ENCODE measurements at regions of chr2 and their contacts with region 1.

Region 1: GRCh38 chr2:23916727-23917405 is 10.1 kb downstream of the ATAD2B start:
- DNase-seq: no peak
- ATAC-seq: peak; percentile 66; the same call in 1 of the 2 replicates
- H3K4me3 ChIP-seq: no peak overlapping the region
- H3K27ac ChIP-seq: peak overlapping the region; percentile 20; the same call in 1 of the 2 replicates
- H3K4me1 ChIP-seq: peaks cover 20% of the 10 kb centered on the region
- H3K27me3 ChIP-seq: no peaks in the 10 kb centered on the region
- CTCF ChIP-seq: no peak

Region 2: GRCh38 chr2:23207871-23208270 is 709.0 kb before region 1 on chr2:
- CTCF ChIA-PET with region 1: no interaction called
- POLR2A ChIA-PET with region 1: no interaction called
- in situ Hi-C with region 1: no loop called
- intact Hi-C with region 1: no loop called
- DNase-seq: no peak
- ATAC-seq: no peak
- H3K4me3 ChIP-seq: no peak overlapping the region
- H3K27ac ChIP-seq: no peak overlapping the region
- H3K4me1 ChIP-seq: no peaks in the 10 kb centered on the region
- H3K27me3 ChIP-seq: no peaks in the 10 kb centered on the region; the same call in 1 of the 2 replicates
- CTCF ChIP-seq: no peak

Region 3: DNA sequence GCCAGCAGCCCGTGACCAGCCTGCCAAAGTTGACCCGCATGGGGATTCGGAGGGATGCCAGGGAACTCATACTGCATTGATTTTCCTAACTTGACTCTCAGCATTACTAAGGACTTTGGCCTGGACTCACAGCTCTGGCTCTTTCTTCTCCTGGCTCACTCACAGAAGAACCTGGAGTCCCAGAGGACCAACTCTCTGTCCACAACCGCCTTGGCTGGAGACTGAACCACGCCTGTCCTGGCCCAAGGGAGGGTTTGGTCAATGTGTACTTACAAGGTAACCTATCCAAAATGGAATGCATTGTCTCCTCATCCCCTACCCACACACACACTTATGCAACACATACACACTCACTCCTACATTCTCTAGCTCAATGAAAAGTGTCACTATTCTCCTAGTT is 667.5 kb before region 1 on chr2:
- CTCF ChIA-PET with region 1: no interaction called
- POLR2A ChIA-PET with region 1: no interaction called
- in situ Hi-C with region 1: no loop called
- intact Hi-C with region 1: no loop called
- DNase-seq: no peak
- ATAC-seq: no peak
- H3K4me3 ChIP-seq: no peak overlapping the region
- H3K27ac ChIP-seq: no peak overlapping the region
- H3K4me1 ChIP-seq: no peaks in the 10 kb centered on the region
- H3K27me3 ChIP-seq: peaks cover 2% of the 10 kb centered on the region; the same call in 1 of the 2 replicates
- CTCF ChIP-seq: no peak

Region 4: DNA sequence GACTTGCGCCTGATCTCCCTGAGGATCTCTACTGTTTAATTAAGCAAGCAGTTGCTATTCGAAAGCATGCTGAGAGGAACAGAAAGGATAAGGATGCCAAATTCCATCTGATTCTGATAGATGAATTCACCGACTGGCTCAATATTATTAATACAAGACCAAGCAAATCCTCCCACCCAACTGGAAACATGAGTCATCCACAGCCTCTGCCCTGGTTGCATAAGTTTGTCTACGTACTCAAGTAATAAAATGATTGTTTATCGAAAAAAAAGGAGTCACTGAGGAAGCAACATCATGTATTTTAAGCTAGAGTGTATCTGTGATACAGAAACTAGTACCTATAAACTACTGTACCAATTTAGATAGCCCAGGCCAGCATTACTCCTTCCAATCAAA is 15.9 kb before region 1 on chr2:
- CTCF ChIA-PET with region 1: no interaction called
- POLR2A ChIA-PET with region 1: interaction called, 23 read pairs
- in situ Hi-C with region 1: no loop called
- intact Hi-C with region 1: no loop called
- DNase-seq: no peak
- ATAC-seq: peak; percentile 31; the same call in 1 of the 2 replicates
- H3K4me3 ChIP-seq: no peak overlapping the region
- H3K27ac ChIP-seq: peak overlapping the region; percentile 52
- H3K4me1 ChIP-seq: peaks cover 22% of the 10 kb centered on the region
- H3K27me3 ChIP-seq: no peaks in the 10 kb centered on the region
- CTCF ChIP-seq: no peak